Activated B cell treated with CpG ODN at 0.5 μM for 24 hours (primary cell): ENCODE measurements at regions of chr6 and their contacts with region 1.

Region 1: DNA sequence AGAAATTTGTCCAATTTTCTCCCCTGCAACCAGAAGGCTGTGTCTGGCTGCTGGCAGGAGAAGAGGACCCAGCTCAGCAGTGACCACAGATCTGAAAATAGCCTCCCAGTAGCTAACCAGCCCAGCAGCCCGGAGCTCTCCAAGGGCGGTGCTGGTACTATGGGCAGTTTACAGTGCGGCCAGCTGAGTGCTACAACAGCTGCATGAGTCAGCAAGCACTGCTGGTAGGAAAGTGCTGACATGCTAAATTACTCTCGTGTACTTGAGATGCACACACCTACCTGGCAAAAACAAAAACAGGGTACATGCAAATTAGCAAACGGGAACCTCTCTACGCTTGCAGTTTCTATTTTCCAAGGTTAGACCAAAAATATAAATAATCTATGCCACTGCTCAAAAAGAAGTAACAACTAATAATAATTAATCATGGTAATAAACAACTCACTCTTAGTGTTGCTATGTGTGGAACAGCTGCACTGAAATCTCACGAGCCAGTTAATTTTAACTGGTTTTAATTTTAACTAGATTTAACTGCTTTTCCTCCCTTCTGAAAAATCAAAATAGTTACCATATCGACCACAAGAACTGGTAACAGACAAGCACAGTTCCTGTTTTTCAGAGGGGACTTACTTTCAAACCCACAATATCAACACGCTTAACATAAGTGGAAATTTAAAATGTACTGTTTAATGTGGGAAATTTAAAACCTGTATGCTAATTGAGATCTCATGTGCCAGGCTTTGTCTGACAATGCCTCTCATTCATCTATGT is 10.8 kb downstream of the BACH2 start:
- DNase-seq: no peak
- ATAC-seq: peak; percentile 67
- H3K4me3 Mint-ChIP-seq: peak overlapping the region; percentile 77
- H3K27ac Mint-ChIP-seq: peak overlapping the region; percentile 88
- H3K4me1 Mint-ChIP-seq: peaks cover 92% of the 10 kb centered on the region
- H3K27me3 Mint-ChIP-seq: no peaks in the 10 kb centered on the region
- CTCF ChIP-seq: no peak

Region 2: DNA sequence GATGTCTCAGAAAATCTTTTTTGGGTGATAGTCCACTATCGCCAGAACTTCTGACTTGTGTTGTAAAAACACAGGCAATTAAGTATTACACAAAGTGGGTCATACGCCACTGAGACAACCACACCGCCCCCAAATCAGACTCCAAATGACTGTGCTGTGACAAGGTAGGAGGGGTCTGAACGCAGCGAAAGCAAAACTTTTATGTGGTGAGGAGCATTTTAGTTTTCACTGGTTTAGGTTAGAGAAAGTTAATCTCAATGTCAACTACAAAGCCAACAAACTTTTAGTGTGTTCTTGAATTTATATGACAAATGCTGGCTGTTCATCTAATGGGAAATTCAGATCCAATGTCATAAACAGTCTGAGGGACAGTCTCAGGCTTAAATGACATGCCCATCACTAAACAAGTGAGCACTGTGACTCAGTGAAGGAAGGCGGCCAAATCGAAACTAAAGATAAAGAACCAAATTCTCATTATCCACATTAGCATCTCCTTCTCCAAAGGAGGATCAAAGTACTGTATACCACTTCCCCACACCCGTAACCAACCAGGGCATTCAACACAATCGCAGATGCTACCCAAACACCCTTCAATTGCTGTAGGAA is 204.8 kb before region 1 on chr6:
- CTCF ChIA-PET with region 1: no interaction called
- POLR2A ChIA-PET with region 1: interaction called, 5 read pairs
- intact Hi-C with region 1: loop called (anchors 2 kb)
- DNase-seq: no peak
- ATAC-seq: peak; percentile 61
- H3K4me3 Mint-ChIP-seq: peak overlapping the region; percentile 84
- H3K27ac Mint-ChIP-seq: peak overlapping the region; percentile 86
- H3K4me1 Mint-ChIP-seq: peaks cover 96% of the 10 kb centered on the region
- H3K27me3 Mint-ChIP-seq: no peaks in the 10 kb centered on the region
- CTCF ChIP-seq: no peak

Region 3: DNA sequence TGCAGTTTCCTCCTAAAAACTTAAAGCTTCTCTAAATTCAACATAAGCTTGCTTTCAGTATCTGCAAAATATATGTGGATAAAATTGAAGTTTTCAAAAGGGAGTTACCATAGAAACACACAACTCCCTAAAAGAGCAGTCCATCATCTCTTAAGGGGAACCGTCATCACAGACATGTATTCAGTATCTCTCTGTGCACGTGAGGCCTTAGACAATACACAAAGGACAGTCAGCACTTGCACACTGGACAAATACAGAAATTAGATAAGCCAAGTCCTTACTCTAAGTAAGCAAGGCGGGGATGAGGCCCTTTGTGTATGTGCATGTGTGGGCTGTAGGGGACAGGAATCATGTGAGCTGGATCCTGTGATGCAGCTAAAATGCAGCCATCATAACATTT is 125.8 kb before region 1 on chr6:
- CTCF ChIA-PET with region 1: no interaction called
- POLR2A ChIA-PET with region 1: interaction called, 10 read pairs
- intact Hi-C with region 1: no loop called
- DNase-seq: no peak
- ATAC-seq: peak; percentile 34
- H3K4me3 Mint-ChIP-seq: peak overlapping the region; percentile 13
- H3K27ac Mint-ChIP-seq: peak overlapping the region; percentile 64
- H3K4me1 Mint-ChIP-seq: peaks cover 78% of the 10 kb centered on the region
- H3K27me3 Mint-ChIP-seq: no peaks in the 10 kb centered on the region
- CTCF ChIP-seq: no peak

Region 4: GRCh38 chr6:90274451-90275030 is 11.3 kb before region 1 on chr6:
- CTCF ChIA-PET with region 1: interaction called, 6 read pairs
- POLR2A ChIA-PET with region 1: interaction called, 69 read pairs
- intact Hi-C with region 1: loop called (anchors 1 kb)
- DNase-seq: peak; percentile 43
- ATAC-seq: peak; percentile 84
- H3K4me3 Mint-ChIP-seq: peak overlapping the region; percentile 64
- H3K27ac Mint-ChIP-seq: peak overlapping the region; percentile 85
- H3K4me1 Mint-ChIP-seq: peaks cover 93% of the 10 kb centered on the region
- H3K27me3 Mint-ChIP-seq: no peaks in the 10 kb centered on the region
- CTCF ChIP-seq: no peak

Region 5: DNA sequence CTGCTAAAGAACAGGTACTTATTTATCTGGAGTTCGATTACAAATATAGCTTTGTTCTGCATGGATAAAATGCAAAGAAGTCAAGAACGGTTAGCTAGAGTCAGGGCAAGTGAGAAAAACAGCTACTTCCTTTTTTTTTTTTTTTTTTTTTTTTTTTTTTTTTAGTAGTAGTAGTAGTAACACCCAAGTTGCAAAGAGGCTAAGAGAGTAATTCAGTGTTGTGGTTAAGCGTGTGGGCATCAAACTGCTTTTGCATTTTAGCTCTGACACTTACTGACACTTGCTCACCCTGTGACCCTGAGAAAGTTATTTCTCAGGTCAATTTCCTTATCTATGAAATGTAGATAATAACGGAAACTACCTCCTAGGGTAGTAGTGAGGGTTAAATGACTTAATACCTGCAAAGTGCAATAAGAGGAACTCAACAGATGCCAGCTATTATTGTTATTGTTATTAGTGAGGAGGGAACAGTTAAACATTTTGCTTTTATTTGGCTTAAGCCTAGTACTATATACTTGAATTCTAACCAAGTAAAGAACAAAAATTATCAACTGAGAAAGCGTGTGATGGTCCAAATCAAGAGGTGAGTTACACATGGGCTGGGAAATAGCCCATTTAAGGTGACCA is 97.5 kb after region 1 on chr6:
- CTCF ChIA-PET with region 1: interaction called, 8 read pairs
- POLR2A ChIA-PET with region 1: interaction called, 5 read pairs
- intact Hi-C with region 1: loop called (anchors 2 kb)
- DNase-seq: no peak
- ATAC-seq: peak; percentile 80
- H3K4me3 Mint-ChIP-seq: peak overlapping the region; percentile 61
- H3K27ac Mint-ChIP-seq: peak overlapping the region; percentile 75
- H3K4me1 Mint-ChIP-seq: peaks cover 80% of the 10 kb centered on the region
- H3K27me3 Mint-ChIP-seq: no peaks in the 10 kb centered on the region
- CTCF ChIP-seq: no peak

Region 6: GRCh38 chr6:90537723-90538258 is 252.0 kb after region 1 on chr6:
- CTCF ChIA-PET with region 1: no interaction called
- POLR2A ChIA-PET with region 1: no interaction called
- intact Hi-C with region 1: loop called (anchors 1 kb)
- DNase-seq: no peak
- ATAC-seq: peak; percentile 67
- H3K4me3 Mint-ChIP-seq: peak overlapping the region; percentile 0
- H3K27ac Mint-ChIP-seq: peak overlapping the region; percentile 74
- H3K4me1 Mint-ChIP-seq: peaks cover 25% of the 10 kb centered on the region
- H3K27me3 Mint-ChIP-seq: no peaks in the 10 kb centered on the region
- CTCF ChIP-seq: no peak